Dendritic cell treated with granulocyte-macrophage colony-stimulating factor and Interleukin-4, amounts not matched to agents 40 ng/mL and 50 ng/mL, for 4 days (primary cell): ENCODE measurements at regions of chr11 and their contacts with region 1.

Region 1: DNA sequence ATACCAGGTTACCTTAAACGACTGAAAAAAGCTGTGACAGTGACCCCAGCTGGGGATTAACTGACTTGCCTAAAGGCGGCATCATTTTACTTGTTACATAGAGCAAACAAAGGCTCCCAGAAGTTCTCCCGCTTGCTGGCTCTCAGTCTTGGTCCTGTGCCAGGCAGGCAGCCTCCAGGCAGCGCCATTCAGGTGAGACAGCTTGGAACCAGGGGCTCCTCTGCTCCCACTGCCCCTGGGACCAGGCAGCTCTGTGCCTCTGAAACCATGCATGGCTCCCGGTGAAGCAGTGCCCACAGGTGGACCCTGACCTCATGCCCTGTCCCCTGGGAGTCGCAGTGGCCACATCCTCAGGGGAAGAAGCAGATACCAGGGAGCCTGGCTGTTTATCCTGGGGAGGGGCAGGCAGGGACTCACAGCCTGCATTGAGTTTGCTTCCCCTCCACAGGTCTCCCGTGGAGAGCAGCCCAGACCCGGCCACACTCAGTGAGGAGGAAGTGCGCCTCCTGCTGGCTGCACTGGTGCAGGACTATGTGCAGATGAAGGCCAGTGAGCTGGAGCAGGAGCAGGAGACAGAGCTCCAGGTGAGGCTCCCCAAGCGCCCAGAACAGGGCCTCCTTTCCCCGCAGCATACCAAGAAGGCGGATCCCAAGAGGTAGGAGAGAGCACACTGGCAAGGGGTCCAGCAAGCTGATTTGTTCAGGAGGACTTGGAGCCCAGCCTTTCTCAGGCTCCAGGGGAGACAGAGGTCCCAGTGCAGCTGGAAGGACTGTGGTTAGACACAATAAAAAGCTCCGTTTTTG is 15.6 kb upstream of the CYP2R1 start:
- H3K4me3 Mint-ChIP-seq: no peak overlapping the region
- H3K27ac Mint-ChIP-seq: no peak overlapping the region
- H3K4me1 Mint-ChIP-seq: peaks cover 36% of the 10 kb centered on the region
- H3K27me3 Mint-ChIP-seq: peaks cover 32% of the 10 kb centered on the region

Region 2: DNA sequence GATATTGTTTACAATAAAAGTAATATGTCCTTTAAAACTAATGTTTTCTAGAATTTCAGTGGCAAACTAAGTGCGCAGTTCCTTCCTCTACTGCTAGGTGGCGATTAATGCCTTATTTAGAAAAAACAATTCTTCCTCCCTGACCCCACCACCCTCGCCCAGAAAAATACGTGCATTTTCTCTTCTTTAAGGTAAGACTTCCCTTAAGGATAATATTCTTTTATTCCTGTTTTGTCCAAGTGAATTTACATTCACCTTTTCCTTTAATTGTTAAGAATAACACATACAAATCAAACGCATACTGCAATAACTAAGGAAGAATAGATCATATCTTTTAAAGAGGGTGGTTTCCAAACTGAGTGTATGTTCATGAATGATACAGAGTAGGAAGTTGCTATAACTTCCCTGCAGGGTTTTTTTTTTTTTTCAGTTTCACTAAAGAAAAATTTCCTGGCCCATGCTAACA is 370.4 kb before region 1 on chr11:
- intact Hi-C with region 1: loop called (anchors 1 kb)
- H3K4me3 Mint-ChIP-seq: peak overlapping the region; percentile 51
- H3K27ac Mint-ChIP-seq: peak overlapping the region; percentile 41
- H3K4me1 Mint-ChIP-seq: peaks cover 22% of the 10 kb centered on the region
- H3K27me3 Mint-ChIP-seq: no peaks in the 10 kb centered on the region

Region 3: GRCh38 chr11:14789879-14790484 is 117.6 kb before region 1 on chr11:
- intact Hi-C with region 1: loop called (anchors 1 kb)
- H3K4me3 Mint-ChIP-seq: no peak overlapping the region
- H3K27ac Mint-ChIP-seq: no peak overlapping the region
- H3K4me1 Mint-ChIP-seq: no peaks in the 10 kb centered on the region
- H3K27me3 Mint-ChIP-seq: no peaks in the 10 kb centered on the region

Region 4: GRCh38 chr11:14974515-14975251 is 67.1 kb after region 1 on chr11:
- intact Hi-C with region 1: no loop called
- H3K4me3 Mint-ChIP-seq: no peak overlapping the region
- H3K27ac Mint-ChIP-seq: no peak overlapping the region
- H3K4me1 Mint-ChIP-seq: peaks cover 15% of the 10 kb centered on the region
- H3K27me3 Mint-ChIP-seq: peaks cover 76% of the 10 kb centered on the region

Region 5: GRCh38 chr11:15074206-15075161 is 166.9 kb after region 1 on chr11:
- intact Hi-C with region 1: loop called (anchors 2 kb)
- H3K4me3 Mint-ChIP-seq: no peak overlapping the region
- H3K27ac Mint-ChIP-seq: no peak overlapping the region
- H3K4me1 Mint-ChIP-seq: peaks cover 19% of the 10 kb centered on the region
- H3K27me3 Mint-ChIP-seq: peaks cover 34% of the 10 kb centered on the region

Region 6: GRCh38 chr11:15707971-15708370 is 800.4 kb after region 1 on chr11:
- intact Hi-C with region 1: no loop called
- H3K4me3 Mint-ChIP-seq: no peak overlapping the region
- H3K27ac Mint-ChIP-seq: peak overlapping the region; percentile 43
- H3K4me1 Mint-ChIP-seq: peaks cover 20% of the 10 kb centered on the region
- H3K27me3 Mint-ChIP-seq: peaks cover 25% of the 10 kb centered on the region